Heart left ventricle (tissue), 16 donors: ENCODE measurements at regions of chr17 and their contacts with region 1.

Region 1: DNA sequence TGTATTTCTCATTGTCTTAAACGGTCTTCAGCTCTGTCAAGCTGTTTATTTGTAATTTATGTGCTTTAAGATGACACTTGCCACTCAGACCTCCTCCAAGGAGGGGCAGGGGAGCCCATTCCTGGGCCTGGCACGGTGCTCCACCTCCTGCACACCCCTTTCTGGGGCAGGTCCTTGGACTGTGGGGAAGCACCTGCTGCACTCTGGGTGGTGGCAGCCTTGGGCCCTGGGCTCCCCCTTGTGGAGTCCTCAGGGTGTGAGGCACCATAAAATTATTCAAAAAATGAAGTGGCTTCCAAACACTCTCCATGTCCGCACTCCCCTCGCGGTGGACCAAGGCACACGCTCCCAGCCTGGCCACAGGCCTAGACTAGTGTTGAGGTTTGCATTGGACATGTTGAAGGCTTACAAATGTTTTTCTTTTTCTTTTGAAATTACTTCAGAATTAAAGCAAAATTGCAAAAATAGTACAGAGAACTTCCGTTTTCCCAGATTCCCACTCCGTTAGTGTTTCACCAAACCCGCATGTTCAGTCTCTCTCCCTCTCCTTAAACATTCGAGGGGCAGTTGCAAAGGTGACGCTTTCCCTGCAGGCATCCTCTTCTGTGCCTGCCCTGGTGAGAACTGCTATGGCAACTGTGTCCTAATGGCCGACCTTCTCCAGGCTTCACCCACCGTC is 32.4 kb downstream of the FOXK2 start:
- DNase-seq: peak; percentile 67 to 85 (median 76)
- ATAC-seq: peak; percentile 62 to 82 (median 75)
- H3K4me3 ChIP-seq: no peak overlapping the region
- H3K27ac ChIP-seq: peak overlapping the region in 8 of 12 donors; percentile 6 to 85 (median 58)
- H3K4me1 ChIP-seq: peaks cover 13 to 62% (median 50%) of the 10 kb centered on the region in 12 donors
- H3K27me3 ChIP-seq: no peaks in the 10 kb centered on the region
- CTCF ChIP-seq: peak; percentile 57 to 84 (median 74)
- POLR2A ChIP-seq: no peak

Region 2: GRCh38 chr17:82022981-82023374 is 528.9 kb before region 1 on chr17 and contains the start of gene LRRC45:
- intact Hi-C with region 1: no loop called
- DNase-seq: peak; percentile 100
- ATAC-seq: peak; percentile 94 to 98 (median 96)
- H3K4me3 ChIP-seq: peak within 1 kb of the TSS; percentile 77 to 99 (median 94)
- H3K27ac ChIP-seq: peak within 1 kb of the TSS in 11 of 12 donors; percentile 32 to 85 (median 73)
- H3K4me1 ChIP-seq: peaks cover 5 to 37% (median 23%) of the 10 kb centered on the region in 12 donors
- H3K27me3 ChIP-seq: no peaks in the 10 kb centered on the region
- CTCF ChIP-seq: no peak
- POLR2A ChIP-seq: no peak
- total RNA-seq, gene LRRC45: 2.9 to 7.5 (median 5.6) TPM

Region 3: GRCh38 chr17:82351716-82352488 is 200.0 kb before region 1 on chr17:
- intact Hi-C with region 1: loop called in 9 of 10 experiments (anchors 2 to 10 kb)
- DNase-seq: peak; percentile 79 to 88 (median 85)
- ATAC-seq: peak; percentile 49 to 91 (median 87)
- H3K4me3 ChIP-seq: no peak overlapping the region
- H3K27ac ChIP-seq: no peak overlapping the region
- H3K4me1 ChIP-seq: peaks cover 0 to 14% (median 3%) of the 10 kb centered on the region in 12 donors
- H3K27me3 ChIP-seq: peaks cover 0 to 11% (median 0%) of the 10 kb centered on the region in 9 donors
- CTCF ChIP-seq: peak; percentile 92 to 99 (median 97)
- POLR2A ChIP-seq: no peak

Region 4: GRCh38 chr17:82440991-82441627 is 110.8 kb before region 1 on chr17:
- intact Hi-C with region 1: no loop called
- DNase-seq: peak in 1 of 5 donors; percentile 61
- ATAC-seq: peak in 1 of 4 donors; percentile 21
- H3K4me3 ChIP-seq: no peak overlapping the region
- H3K27ac ChIP-seq: peak overlapping the region in 3 of 12 donors; percentile 10 to 69 (median 34)
- H3K4me1 ChIP-seq: peaks cover 0 to 32% (median 5%) of the 10 kb centered on the region in 12 donors
- H3K27me3 ChIP-seq: no peaks in the 10 kb centered on the region
- CTCF ChIP-seq: no peak
- POLR2A ChIP-seq: no peak

Region 5: DNA sequence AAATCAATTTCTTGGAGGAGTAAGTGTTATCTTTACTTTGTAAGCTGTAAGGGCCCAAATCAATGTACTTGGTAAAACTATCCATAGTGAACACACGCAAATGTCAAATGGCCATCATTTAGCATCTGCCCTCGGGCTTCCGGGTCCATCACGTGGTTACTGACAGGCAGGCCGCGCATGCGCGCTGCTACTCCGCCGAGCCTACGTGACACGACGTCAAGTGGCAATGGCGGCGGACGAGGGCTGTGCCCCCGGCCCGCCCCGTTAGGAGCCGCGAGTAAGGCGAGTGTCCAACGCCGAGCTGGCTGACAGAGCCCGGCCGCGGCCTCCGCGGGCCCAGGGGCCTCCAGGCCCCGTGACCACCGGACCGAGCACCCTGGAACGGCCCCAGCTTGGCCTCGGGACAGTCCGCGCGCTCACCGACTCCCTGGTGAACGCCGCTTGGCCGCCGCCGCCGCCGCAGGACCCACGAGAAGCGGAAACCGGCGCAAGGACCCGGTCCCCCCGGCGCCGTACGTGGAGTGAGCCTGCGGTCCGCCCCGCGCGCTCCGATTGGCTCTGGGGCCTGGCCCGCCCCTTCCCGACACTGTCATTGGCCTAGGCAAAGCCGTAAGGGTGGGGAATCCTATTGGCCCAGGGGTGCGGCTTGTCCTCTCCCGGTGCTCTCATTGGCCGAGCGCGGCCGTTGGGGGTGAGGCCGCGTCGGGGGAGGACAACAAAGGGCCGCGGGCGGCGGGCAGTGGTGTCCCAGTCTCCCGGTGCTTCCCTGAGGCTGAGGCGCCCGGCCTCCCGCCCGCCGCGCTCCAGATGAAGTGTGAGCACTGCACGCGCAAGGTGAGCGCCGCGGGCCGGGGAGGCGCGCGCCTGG is 93.7 kb before region 1 on chr17 and contains the start of gene NARF:
- intact Hi-C with region 1: no loop called
- DNase-seq: peak; percentile 97 to 99 (median 98)
- ATAC-seq: peak; percentile 99 to 100 (median 99)
- H3K4me3 ChIP-seq: peak within 1 kb of the TSS; percentile 67 to 98 (median 92)
- H3K27ac ChIP-seq: peak within 1 kb of the TSS; percentile 98 to 100 (median 100)
- H3K4me1 ChIP-seq: peaks cover 3 to 39% (median 28%) of the 10 kb centered on the region in 12 donors
- H3K27me3 ChIP-seq: no peaks in the 10 kb centered on the region
- CTCF ChIP-seq: no peak
- POLR2A ChIP-seq: peak; percentile 28 to 97
- total RNA-seq, gene NARF: 48.6 to 77.4 (median 59.5) TPM

Region 6: DNA sequence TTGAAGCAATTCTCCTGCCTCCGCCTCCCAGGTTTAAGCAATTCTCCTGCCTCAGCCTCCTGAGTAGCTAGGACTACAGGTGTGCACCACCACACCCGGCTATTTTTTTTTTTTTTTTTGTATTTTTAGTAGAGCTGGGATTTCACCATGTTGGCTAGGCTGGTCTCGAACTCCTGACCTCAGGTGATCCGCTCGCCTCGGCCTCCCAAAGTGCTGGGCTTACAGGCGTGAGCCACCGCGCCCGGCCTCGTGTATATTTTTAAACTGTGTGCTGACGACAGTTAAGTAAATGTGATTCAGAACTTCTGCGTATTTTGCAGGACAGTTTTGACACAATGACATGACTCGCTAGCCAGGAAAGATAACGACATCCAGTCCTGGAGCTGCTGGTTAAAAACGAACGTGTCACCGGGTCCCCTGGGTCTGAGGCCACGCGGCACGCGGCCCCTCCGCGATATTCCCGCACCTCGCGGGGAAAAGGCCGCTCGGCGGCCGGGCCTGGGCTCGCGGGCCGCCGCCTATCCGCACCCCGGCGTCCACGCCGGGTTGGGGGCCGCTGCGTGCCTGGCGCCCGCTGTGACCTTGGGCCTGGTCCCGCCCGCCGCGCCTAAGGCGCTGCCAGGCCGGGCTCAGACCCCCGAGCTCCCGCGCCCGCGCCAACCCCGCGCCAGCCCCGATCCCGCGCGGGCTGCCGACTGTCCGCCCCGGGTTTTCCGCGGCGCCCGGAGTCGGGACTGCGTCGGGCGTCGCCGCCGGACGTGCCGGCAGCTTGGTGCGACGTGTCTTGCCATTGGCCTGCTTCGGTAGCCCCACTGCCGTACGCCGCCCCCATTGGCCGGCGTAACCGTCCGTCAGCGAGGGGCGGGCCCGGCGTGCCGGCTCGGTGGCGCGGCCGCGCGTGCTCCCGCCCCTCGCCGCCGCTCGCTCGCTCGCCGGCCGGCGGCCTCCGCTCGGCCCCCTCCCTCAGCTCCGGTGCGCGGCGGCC is 32.8 kb before region 1 on chr17 and contains the start of gene FOXK2:
- intact Hi-C with region 1: loop called in 1 of 10 experiments (anchors 5 kb)
- DNase-seq: peak; percentile 94 to 97 (median 96)
- ATAC-seq: peak; percentile 97 to 99 (median 98)
- H3K4me3 ChIP-seq: peak within 1 kb of the TSS; percentile 68 to 97 (median 85)
- H3K27ac ChIP-seq: peak within 1 kb of the TSS; percentile 93 to 99 (median 96)
- H3K4me1 ChIP-seq: peaks cover 0 to 44% (median 20%) of the 10 kb centered on the region in 12 donors
- H3K27me3 ChIP-seq: no peaks in the 10 kb centered on the region
- CTCF ChIP-seq: no peak
- POLR2A ChIP-seq: peak in 1 of 2 donors; percentile 65
- total RNA-seq, gene FOXK2: 26.9 to 77.0 (median 33.9) TPM

Region 7: DNA sequence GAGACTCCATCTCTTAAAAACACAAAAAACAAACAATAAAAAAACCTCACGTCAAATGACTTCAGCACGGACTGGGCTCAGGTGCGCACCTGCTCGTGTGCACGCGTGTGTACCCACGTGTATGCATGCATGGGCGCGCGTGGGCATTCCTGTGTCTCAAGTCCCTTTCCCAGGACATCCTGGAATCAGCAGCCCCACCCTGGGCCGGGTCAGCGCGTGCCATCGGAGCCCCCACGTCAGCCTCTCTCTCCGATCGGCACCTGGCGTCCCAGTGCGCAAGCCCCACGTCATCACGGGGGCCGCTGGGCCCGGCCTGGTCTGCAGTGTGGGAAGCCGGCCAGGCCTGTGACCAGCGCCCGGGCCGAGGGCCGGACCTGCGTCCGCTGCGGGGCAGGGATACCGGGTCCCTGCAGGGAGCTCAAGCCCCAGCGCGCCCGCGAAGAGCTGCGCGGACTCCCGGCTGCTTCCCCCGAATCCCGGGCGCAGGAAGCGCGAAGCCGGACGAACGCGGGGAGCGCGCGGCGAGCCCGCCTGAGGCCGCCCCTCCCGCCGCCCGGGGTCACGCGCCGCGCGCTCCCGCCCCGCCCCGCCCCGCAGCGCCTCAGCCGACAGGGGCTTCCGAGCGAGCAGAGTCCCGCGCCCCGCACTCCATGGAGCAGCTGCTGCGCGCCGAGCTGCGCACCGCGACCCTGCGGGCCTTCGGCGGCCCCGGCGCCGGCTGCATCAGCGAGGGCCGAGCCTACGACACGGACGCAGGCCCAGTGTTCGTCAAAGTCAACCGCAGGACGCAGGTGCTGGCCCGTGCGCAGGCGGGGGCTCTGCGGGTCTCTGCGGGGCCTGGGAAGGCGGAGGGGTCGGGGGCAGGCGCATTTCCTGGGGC is 183.3 kb after region 1 on chr17 and contains the start of gene FN3K:
- intact Hi-C with region 1: no loop called
- DNase-seq: peak; percentile 75 to 81 (median 80)
- ATAC-seq: peak in 3 of 4 donors; percentile 46 to 64 (median 58)
- H3K4me3 ChIP-seq: peak within 1 kb of the TSS; percentile 43 to 95 (median 81)
- H3K27ac ChIP-seq: peak within 1 kb of the TSS; percentile 80 to 98 (median 94)
- H3K4me1 ChIP-seq: peaks cover 0 to 31% (median 9%) of the 10 kb centered on the region in 12 donors
- H3K27me3 ChIP-seq: no peaks in the 10 kb centered on the region
- CTCF ChIP-seq: no peak
- POLR2A ChIP-seq: peak in 1 of 2 donors; percentile 55
- total RNA-seq, gene FN3K: 15.5 to 121 (median 69.4) TPM